ENCODE measurements at regions of chr7 and their contacts with region 1.

Region 1: GRCh38 chr7:149497456-149498261 is at the start of gene ZNF746:
- DNase-seq: peak; percentile 96 to 97 (median 97)
- ATAC-seq: peak; percentile 91
- H3K4me3 ChIP-seq: peak within 1 kb of the TSS; percentile 78
- H3K27ac ChIP-seq: peak within 1 kb of the TSS; percentile 71
- H3K4me1 ChIP-seq: peaks cover 31 to 34% of the 10 kb centered on the region in 2 experiments
- H3K27me3 ChIP-seq: peaks cover 5 to 16% of the 10 kb centered on the region in 2 experiments; a peak in 3 of 5 replicates
- CTCF ChIP-seq: peak; percentile 57 to 97 (median 92); a peak in 5 of 6 replicates
- EP300 ChIP-seq: peak; percentile 42; the same call in 1 of the 2 replicates
- POLR2A ChIP-seq: no peak
- RAD21 ChIP-seq: peak; percentile 77 to 83
- polyA plus RNA-seq, gene ZNF746: 1.7 to 2.0 TPM

Region 2: GRCh38 chr7:148987010-148987750 is 510.5 kb before region 1 on chr7:
- CTCF ChIA-PET with region 1: no interaction called
- POLR2A ChIA-PET with region 1: no interaction called
- in situ Hi-C with region 1: no loop called
- intact Hi-C with region 1: loop called (anchors 5 kb)
- DNase-seq: peak; percentile 97 to 98 (median 98)
- ATAC-seq: peak; percentile 88
- H3K4me3 ChIP-seq: peak overlapping the region; percentile 53
- H3K27ac ChIP-seq: peak overlapping the region; percentile 75
- H3K4me1 ChIP-seq: peaks cover 10 to 27% of the 10 kb centered on the region in 2 experiments; a peak in 4 of 5 replicates
- H3K27me3 ChIP-seq: no peaks in the 10 kb centered on the region
- CTCF ChIP-seq: no peak; a peak in 1 of 6 replicates
- EP300 ChIP-seq: no peak; the same call in none of the 2 replicates
- POLR2A ChIP-seq: no peak
- RAD21 ChIP-seq: peak; percentile 5 to 13; a peak in 2 of 4 replicates

Region 3: GRCh38 chr7:149310113-149310836 is 187.4 kb before region 1 on chr7:
- CTCF ChIA-PET with region 1: interaction called, 4 read pairs
- POLR2A ChIA-PET with region 1: interaction called, 4 read pairs
- in situ Hi-C with region 1: no loop called
- intact Hi-C with region 1: loop called (anchors 1 kb)
- DNase-seq: peak; percentile 71 to 75 (median 73)
- ATAC-seq: peak; percentile 92
- H3K4me3 ChIP-seq: no peak overlapping the region
- H3K27ac ChIP-seq: no peak overlapping the region
- H3K4me1 ChIP-seq: peaks cover 0 to 3% of the 10 kb centered on the region in 2 experiments; a peak in 1 of 5 replicates
- H3K27me3 ChIP-seq: peaks cover 0 to 7% of the 10 kb centered on the region in 2 experiments; a peak in 1 of 5 replicates
- CTCF ChIP-seq: peak; percentile 84 to 94 (median 88); a peak in 5 of 6 replicates
- EP300 ChIP-seq: peak; percentile 12; the same call in 1 of the 2 replicates
- POLR2A ChIP-seq: no peak
- RAD21 ChIP-seq: peak; percentile 71 to 88

Region 4: DNA sequence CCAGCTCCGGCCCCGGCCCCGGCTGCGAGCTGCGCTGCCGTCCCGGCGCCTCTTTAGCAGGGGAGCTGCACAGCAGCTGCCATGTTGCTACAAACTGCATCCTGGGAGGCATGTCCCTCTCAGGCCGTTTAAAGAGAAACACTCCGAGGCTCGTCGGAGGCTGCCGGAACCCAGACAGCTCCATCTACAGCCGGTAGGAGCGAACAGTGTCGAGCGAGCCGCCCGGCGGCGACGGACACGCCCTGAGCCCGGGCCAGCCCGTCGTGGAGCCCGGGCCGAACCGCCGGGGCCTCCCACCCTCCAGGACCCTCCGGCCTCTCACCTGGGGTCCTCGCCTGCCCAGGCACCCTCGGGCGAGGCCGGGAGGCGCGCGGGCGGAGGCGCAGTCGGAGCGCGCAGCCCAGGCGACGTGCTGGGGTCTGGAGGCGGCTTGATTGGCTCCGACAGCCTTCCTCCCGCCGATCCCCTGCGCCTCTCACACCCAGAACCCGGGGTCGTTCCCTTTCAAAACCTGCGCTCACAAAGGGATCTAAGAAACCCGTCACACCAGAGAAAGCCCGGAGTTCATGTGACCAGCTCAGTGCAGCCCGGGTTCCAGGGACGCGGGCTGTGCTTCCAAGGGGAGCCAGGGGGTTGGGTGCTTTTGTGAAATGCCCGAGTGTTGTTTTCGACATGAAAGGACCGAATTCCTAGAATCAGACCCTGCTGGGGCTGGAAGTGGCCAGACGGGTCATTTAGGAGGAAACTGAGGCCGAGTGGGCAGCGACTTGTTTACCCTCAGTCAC is 37.0 kb before region 1 on chr7 and contains the start of gene ZNF777:
- CTCF ChIA-PET with region 1: no interaction called
- POLR2A ChIA-PET with region 1: interaction called, 5 read pairs
- in situ Hi-C with region 1: no loop called
- intact Hi-C with region 1: loop called (anchors 1 kb)
- DNase-seq: peak in 3 of 4 experiments; percentile 88 to 93 (median 92)
- ATAC-seq: peak; percentile 98
- H3K4me3 ChIP-seq: peak within 1 kb of the TSS; percentile 64
- H3K27ac ChIP-seq: peak within 1 kb of the TSS; percentile 66
- H3K4me1 ChIP-seq: peaks cover 17 to 20% of the 10 kb centered on the region in 2 experiments
- H3K27me3 ChIP-seq: peaks cover 4 to 7% of the 10 kb centered on the region in 2 experiments; a peak in 3 of 5 replicates
- CTCF ChIP-seq: peak; percentile 67 to 88 (median 81)
- EP300 ChIP-seq: 0 out of 2 replicates have a peak, but pooled peaks have one; percentile 31
- POLR2A ChIP-seq: peak; percentile 76
- RAD21 ChIP-seq: peak; percentile 31 to 40
- polyA plus RNA-seq, gene ZNF777: 0.11 to 0.13 TPM

Region 5: GRCh38 chr7:149509774-149510173 is 12.1 kb after region 1 on chr7:
- CTCF ChIA-PET with region 1: no interaction called
- POLR2A ChIA-PET with region 1: interaction called, 14 read pairs
- in situ Hi-C with region 1: no loop called
- intact Hi-C with region 1: no loop called
- DNase-seq: no peak
- ATAC-seq: no peak
- H3K4me3 ChIP-seq: no peak overlapping the region
- H3K27ac ChIP-seq: no peak overlapping the region
- H3K4me1 ChIP-seq: no peaks in the 10 kb centered on the region
- H3K27me3 ChIP-seq: no peaks in the 10 kb centered on the region
- CTCF ChIP-seq: no peak
- EP300 ChIP-seq: no peak
- POLR2A ChIP-seq: no peak
- RAD21 ChIP-seq: no peak